OCI-LY7 (cell line): ENCODE measurements at regions of chr18 and their contacts with region 1.

Region 1: GRCh38 chr18:34787931-34788532 is 77.9 kb downstream of the DTNA start:
- DNase-seq: peak; percentile 47
- H3K4me3 ChIP-seq: no peak overlapping the region
- H3K27ac ChIP-seq: no peak overlapping the region
- H3K4me1 ChIP-seq: no peaks in the 10 kb centered on the region
- CTCF ChIP-seq: peak; percentile 82

Region 2: GRCh38 chr18:34659579-34660517 is 128.2 kb before region 1 on chr18:
- CTCF ChIA-PET with region 1: no interaction called
- POLR2A ChIA-PET with region 1: no interaction called
- intact Hi-C with region 1: loop called (anchors 10 kb)
- DNase-seq: no peak
- H3K4me3 ChIP-seq: no peak overlapping the region
- H3K27ac ChIP-seq: no peak overlapping the region
- H3K4me1 ChIP-seq: no peaks in the 10 kb centered on the region
- CTCF ChIP-seq: no peak